Ascending aorta (tissue), 2 donors: ENCODE measurements at regions of chr12 and their contacts with region 1.

Region 1: DNA sequence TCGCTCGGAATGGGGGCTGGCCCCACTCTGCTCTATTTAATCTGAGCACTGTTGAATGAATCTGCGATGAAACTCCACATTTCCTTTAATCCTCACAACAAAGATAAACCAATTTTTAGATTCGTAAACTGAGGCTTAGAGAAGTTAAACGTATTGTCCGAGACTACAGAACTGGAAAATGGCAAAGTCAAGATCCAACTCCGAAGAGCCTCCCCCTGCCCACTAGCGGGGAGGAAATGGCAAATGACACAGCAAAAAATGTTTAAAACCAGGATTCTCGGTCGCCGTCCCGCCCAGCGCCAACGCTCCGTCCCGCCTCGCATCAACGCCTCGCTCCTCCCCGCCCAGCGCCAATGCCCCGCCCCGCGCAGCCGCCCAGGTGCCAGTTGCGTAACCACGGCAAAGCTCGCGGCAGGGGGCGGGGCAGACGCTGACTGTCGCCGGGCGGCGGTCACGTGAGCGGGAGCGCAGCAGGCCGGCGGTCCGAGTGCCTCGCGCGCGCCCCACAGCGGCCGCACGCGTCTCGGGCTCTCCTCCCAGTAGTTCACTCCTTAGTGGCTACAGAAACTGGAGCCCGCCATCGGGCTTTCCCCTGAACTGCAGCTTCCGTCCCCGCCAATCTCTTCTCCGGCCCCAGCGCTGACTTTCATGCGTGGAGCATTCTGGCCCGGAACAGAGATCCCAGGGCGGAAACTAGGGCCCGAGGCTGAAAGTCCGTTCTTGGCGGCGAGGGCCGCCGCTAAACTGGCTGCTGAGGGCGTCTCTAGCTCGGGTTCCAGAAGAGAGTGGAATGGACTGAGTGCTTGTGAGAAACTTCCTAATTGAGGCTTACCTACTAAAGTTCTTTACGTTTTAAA is 13.6 kb upstream of the LRRC23 start:
- DNase-seq: peak; percentile 88 to 98
- H3K4me3 ChIP-seq: peak overlapping the region; percentile 54 to 72
- H3K27ac ChIP-seq: peak overlapping the region; percentile 92 to 93
- H3K4me1 ChIP-seq: peaks cover 0 to 6% of the 10 kb centered on the region in 2 donors
- H3K27me3 ChIP-seq: no peaks in the 10 kb centered on the region
- CTCF ChIP-seq: peak; percentile 82 to 94 (median 83)

Region 2: DNA sequence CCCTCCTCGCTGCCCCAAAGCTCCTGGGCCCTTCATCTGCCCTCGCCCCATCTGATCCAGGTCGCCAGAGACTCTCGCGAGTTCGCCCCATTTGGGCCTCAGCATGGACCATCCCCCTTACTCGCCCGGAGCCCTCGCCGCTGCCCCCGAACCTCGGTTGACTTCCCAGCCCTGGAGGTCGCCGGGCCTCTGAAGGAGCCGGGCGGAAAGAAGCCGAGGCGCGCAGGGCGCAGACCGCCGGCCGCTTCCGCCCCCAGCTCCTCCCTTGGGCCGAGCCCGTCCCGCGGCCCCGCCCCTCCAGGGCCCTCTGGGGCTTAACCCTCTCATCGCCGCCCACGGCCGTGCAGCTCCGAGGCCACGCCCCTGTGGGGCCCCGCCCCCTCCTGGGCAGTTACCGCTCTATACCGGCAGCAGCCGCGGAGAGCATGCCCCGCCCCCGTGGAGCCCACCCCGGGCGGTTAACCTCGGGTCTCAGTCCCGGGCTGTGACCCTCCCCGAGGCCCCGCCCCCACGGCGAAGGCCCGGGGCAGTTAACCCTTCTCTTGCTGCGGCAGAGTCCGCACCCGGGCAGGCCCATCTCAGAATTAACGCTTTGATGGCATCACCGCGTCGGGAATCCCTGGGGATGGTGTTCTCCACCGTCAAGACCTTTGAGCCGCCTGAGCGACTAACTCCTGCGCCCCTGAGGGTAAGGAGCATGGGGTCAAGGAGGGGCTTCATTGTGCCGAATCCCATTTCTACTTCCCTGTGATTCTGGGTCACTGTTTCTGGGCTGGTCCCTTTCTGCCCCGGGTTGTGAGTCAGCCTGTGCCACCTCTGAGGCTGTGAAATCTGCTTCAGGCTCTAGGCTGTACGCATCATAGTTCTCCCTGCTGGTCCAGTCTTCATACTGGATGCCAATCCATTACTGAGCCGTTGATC is 17.7 kb before region 1 on chr12 and contains the start of gene SPSB2:
- intact Hi-C with region 1: loop called (anchors 1 kb)
- DNase-seq: peak; percentile 85 to 99
- H3K4me3 ChIP-seq: peak within 1 kb of the TSS; percentile 82 to 90
- H3K27ac ChIP-seq: peak within 1 kb of the TSS; percentile 85 to 92
- H3K4me1 ChIP-seq: peaks cover 13 to 28% of the 10 kb centered on the region in 2 donors
- H3K27me3 ChIP-seq: no peaks in the 10 kb centered on the region
- CTCF ChIP-seq: no peak
- total RNA-seq, gene SPSB2: 14.5 TPM